Activated CD8-positive, alpha-beta memory T cell treated with anti-CD3 and anti-CD28 coated beads, Interleukin-2, amount 10 ng/mL, durations not matched to agents 7 days and 5 days (primary cell): ENCODE measurements at regions of chr12 and their contacts with region 1.

Region 1: DNA sequence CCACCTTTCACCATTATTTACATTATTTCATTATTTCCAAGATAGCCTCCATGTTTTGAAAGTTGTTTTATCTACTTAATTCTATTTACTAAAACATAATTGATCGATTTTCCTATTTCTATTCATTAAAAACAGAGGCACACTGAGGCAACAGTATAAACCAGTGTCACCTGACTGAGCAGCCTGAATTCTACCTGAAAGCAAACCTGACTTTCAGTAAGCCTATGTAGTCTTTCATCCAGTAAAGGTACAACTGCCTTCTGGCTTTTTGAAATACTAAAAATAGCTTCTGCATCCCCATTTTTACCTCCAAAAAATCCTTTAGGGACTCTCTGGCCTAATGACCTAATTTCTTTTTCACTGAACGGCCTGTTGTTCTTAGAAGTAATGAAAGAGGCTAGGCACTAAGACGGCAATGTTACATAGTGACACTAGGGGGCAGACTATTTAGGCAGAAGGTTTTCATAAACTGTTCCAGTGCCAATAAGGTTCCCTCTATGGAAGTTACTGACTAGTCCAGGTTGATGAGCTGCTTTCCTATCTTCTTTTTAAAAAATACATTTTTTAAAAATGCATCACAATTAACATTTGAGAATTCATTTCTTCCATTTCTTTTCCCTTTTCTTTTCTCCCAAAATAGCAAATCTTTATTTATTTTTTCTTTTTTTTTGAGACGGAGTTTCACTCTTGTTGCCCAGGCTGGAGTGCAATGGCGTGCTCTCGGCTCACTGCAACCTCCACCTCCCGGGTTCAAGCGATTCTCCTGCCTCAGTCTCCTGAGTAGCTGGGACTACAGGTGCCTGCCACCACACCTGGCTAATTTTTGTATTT is 17.5 kb downstream of the ANAPC5 start:
- DNase-seq: no peak
- ATAC-seq: peak; percentile 78
- H3K4me3 Mint-ChIP-seq: no peak overlapping the region
- H3K27ac Mint-ChIP-seq: no peak overlapping the region
- H3K4me1 Mint-ChIP-seq: peaks cover 3% of the 10 kb centered on the region
- H3K27me3 Mint-ChIP-seq: no peaks in the 10 kb centered on the region

Region 2: GRCh38 chr12:121314431-121314830 is 20.3 kb before region 1 on chr12:
- CTCF ChIA-PET with region 1: interaction called, 10 read pairs
- DNase-seq: no peak
- ATAC-seq: no peak
- H3K4me3 Mint-ChIP-seq: no peak overlapping the region
- H3K27ac Mint-ChIP-seq: peak overlapping the region; percentile 28
- H3K4me1 Mint-ChIP-seq: peaks cover 26% of the 10 kb centered on the region
- H3K27me3 Mint-ChIP-seq: no peaks in the 10 kb centered on the region

Region 3: GRCh38 chr12:121345151-121345815 is 10.6 kb after region 1 on chr12:
- CTCF ChIA-PET with region 1: interaction called, 15 read pairs
- DNase-seq: no peak
- ATAC-seq: no peak
- H3K4me3 Mint-ChIP-seq: no peak overlapping the region
- H3K27ac Mint-ChIP-seq: peak overlapping the region; percentile 1
- H3K4me1 Mint-ChIP-seq: peaks cover 31% of the 10 kb centered on the region
- H3K27me3 Mint-ChIP-seq: no peaks in the 10 kb centered on the region

Region 4: GRCh38 chr12:121351820-121352681 is 17.3 kb after region 1 on chr12 and contains the start of gene ANAPC5:
- CTCF ChIA-PET with region 1: interaction called, 13 read pairs
- DNase-seq: peak; percentile 96
- ATAC-seq: peak; percentile 98
- H3K4me3 Mint-ChIP-seq: peak within 1 kb of the TSS; percentile 93
- H3K27ac Mint-ChIP-seq: peak within 1 kb of the TSS; percentile 99
- H3K4me1 Mint-ChIP-seq: peaks cover 38% of the 10 kb centered on the region
- H3K27me3 Mint-ChIP-seq: peaks cover 6% of the 10 kb centered on the region
- total RNA-seq, gene ANAPC5: 138 to 157 TPM

Region 5: DNA sequence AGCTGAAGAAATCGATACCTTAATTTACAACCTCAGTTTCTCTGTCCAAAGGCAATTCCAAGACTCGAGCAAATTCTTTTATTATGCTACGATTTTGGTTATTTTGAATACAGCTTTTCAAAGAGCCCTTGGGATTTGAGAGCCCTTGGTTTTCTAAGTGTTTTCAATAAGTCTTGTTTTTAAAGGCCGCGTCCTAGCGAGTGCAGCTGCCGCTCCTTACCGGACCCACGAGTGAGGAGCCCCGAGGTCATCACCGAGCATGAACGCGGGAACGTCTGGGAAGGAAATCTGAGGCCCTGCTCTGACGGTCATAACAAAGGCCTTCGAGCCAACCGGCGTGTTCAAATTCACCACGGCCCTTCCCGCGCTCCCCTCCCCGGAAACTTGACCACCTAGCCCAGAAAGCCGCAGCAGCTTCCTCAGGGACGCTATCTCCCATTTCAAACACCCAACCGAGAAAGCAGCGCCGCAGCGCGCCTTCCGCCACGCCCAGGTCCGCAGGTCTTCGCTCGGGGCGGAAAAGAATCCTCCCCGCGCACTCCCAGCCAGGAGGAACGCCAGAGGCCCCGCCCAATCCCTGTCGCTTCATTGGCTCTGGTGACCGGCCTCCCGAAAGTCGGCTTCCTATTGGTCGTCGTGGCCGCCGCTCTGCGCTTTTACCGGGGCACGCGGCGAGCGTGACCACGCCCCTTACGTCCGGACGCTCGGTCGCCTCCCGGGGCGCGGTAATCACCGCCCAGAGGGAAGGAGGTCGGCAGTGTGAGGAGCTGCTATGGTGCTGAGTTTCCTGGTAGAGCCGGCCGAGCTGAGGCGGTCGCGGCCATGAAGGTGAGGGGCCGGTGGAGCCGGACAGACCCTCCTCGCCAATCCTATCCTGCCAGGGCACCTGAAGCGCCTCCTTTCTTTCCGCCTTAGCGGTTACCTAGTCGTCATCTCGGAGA is 64.9 kb after region 1 on chr12 and contains the start of gene RNF34:
- CTCF ChIA-PET with region 1: interaction called, 25 read pairs
- DNase-seq: peak; percentile 99
- ATAC-seq: peak; percentile 93
- H3K4me3 Mint-ChIP-seq: peak within 1 kb of the TSS; percentile 89
- H3K27ac Mint-ChIP-seq: peak within 1 kb of the TSS; percentile 95
- H3K4me1 Mint-ChIP-seq: peaks cover 36% of the 10 kb centered on the region
- H3K27me3 Mint-ChIP-seq: no peaks in the 10 kb centered on the region
- total RNA-seq, gene RNF34: 96.1 to 102 TPM

Region 6: GRCh38 chr12:122006186-122006926 is 671.6 kb after region 1 on chr12:
- CTCF ChIA-PET with region 1: no interaction called
- DNase-seq: peak; percentile 57
- ATAC-seq: peak; percentile 51
- H3K4me3 Mint-ChIP-seq: no peak overlapping the region
- H3K27ac Mint-ChIP-seq: peak overlapping the region; percentile 34
- H3K4me1 Mint-ChIP-seq: peaks cover 28% of the 10 kb centered on the region
- H3K27me3 Mint-ChIP-seq: peaks cover 60% of the 10 kb centered on the region